Right cardiac atrium (tissue), 5 donors: ENCODE measurements at regions of chr17 and their contacts with region 1.

Region 1: DNA sequence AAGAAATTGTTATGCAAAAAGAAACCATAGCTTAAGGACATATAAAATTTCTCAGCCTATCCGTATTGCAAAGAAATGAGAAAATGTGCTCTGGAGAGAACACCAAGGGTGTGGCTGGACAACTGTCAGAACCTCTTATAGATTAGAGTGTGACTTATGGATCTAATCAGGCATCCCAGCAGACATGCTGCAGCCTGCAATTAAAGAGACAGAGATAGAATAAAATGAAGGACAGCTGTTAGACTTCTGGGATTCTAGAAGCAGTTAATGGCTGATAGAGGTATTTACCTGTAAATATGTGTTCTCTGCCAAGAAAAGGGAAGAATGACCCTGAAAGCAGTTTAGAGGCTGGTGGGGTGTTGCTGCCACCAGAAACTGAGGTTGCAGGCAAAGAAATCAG is 160.1 kb upstream of the KIF2B start:
- DNase-seq: no peak
- ATAC-seq: no peak
- H3K4me3 ChIP-seq: no peak overlapping the region
- H3K27ac ChIP-seq: no peak overlapping the region
- H3K4me1 ChIP-seq: no peaks in the 10 kb centered on the region
- H3K27me3 ChIP-seq: no peaks in the 10 kb centered on the region

Region 2: GRCh38 chr17:53607475-53607874 is 55.1 kb before region 1 on chr17:
- intact Hi-C with region 1: loop called in 1 of 4 experiments (anchors 10 kb)
- DNase-seq: no peak
- ATAC-seq: no peak
- H3K4me3 ChIP-seq: no peak overlapping the region
- H3K27ac ChIP-seq: no peak overlapping the region
- H3K4me1 ChIP-seq: no peaks in the 10 kb centered on the region
- H3K27me3 ChIP-seq: no peaks in the 10 kb centered on the region